ENCODE measurements at regions of chr9 and their contacts with region 1.

Region 1: GRCh38 chr9:21434202-21435014 is 5.8 kb upstream of the IFNA1 start:
- DNase-seq: no peak
- ATAC-seq: peak; percentile 47; the same call in 1 of the 3 replicates
- H3K4me3 ChIP-seq: no peak overlapping the region
- H3K27ac ChIP-seq: no peak overlapping the region
- H3K4me1 ChIP-seq: peaks cover 6% of the 10 kb centered on the region; the same call in 1 of the 2 replicates
- H3K27me3 ChIP-seq: no peaks in the 10 kb centered on the region
- CTCF ChIP-seq: peak; percentile 46 to 51 (median 49); a peak in 5 of 6 replicates
- EP300 ChIP-seq: no peak
- POLR2A ChIP-seq: no peak
- RAD21 ChIP-seq: peak; percentile 38

Region 2: DNA sequence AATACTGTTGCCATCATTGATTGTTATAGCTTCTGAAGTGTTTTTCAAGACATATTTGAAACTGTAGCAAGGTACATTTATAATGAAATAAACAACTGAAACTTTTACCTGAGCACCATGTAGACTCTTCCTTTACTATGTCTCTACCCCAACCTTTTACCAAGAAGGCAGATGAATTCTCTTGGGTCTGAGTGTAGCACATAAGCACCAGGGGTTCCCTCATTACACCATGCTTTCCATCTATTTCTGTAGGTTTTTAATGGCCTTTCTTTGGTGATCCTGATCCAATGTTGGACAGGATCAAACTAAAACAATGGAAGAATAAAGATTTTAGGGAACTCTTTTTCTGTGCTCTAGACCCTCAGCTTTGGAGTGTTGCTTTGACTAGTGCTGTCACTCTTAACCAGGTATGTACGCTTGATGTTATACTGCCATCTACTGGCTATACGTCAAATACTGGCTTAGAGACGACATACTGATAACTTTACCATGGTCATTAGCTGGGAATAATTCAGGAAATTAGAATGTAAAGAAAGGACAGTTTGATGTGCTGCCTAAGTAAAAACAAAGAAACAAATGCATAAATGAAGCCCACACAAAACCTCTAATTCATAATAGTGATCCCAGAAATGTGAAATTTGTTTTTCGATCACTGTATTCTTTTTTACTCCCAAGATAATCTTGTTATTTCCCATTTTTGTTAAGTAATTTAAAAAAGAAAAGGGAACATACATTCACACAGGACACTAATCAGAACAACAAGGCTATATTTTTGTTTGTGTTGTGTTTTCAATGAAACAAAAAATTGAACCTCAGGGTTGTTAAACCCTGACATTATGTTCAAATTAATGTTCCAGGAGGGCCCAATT is 323.5 kb before region 1 on chr9:
- CTCF ChIA-PET with region 1: no interaction called
- POLR2A ChIA-PET with region 1: no interaction called
- RAD21 ChIA-PET with region 1: no interaction called
- SMC1A ChIA-PET with region 1: no interaction called
- in situ Hi-C with region 1: no loop called
- intact Hi-C with region 1: no loop called
- DNase-seq: peak; percentile 44
- ATAC-seq: peak; percentile 99
- H3K4me3 ChIP-seq: no peak overlapping the region
- H3K27ac ChIP-seq: no peak overlapping the region
- H3K4me1 ChIP-seq: no peaks in the 10 kb centered on the region
- H3K27me3 ChIP-seq: no peaks in the 10 kb centered on the region
- CTCF ChIP-seq: peak; percentile 77 to 87 (median 78)
- EP300 ChIP-seq: no peak
- POLR2A ChIP-seq: no peak
- RAD21 ChIP-seq: peak; percentile 97

Region 3: GRCh38 chr9:21294325-21294724 is 140.1 kb before region 1 on chr9:
- CTCF ChIA-PET with region 1: no interaction called
- POLR2A ChIA-PET with region 1: no interaction called
- RAD21 ChIA-PET with region 1: no interaction called
- SMC1A ChIA-PET with region 1: no interaction called
- in situ Hi-C with region 1: no loop called
- intact Hi-C with region 1: no loop called
- DNase-seq: peak; percentile 15
- ATAC-seq: peak; percentile 66
- H3K4me3 ChIP-seq: no peak overlapping the region
- H3K27ac ChIP-seq: no peak overlapping the region
- H3K4me1 ChIP-seq: peaks cover 10% of the 10 kb centered on the region
- H3K27me3 ChIP-seq: no peaks in the 10 kb centered on the region; a peak in 1 of 4 replicates
- CTCF ChIP-seq: no peak
- EP300 ChIP-seq: no peak
- POLR2A ChIP-seq: no peak
- RAD21 ChIP-seq: no peak

Region 4: GRCh38 chr9:21305213-21305612 is 129.2 kb before region 1 on chr9 and contains the start of gene IFNA5:
- CTCF ChIA-PET with region 1: no interaction called
- POLR2A ChIA-PET with region 1: no interaction called
- RAD21 ChIA-PET with region 1: no interaction called
- SMC1A ChIA-PET with region 1: no interaction called
- in situ Hi-C with region 1: no loop called
- intact Hi-C with region 1: no loop called
- DNase-seq: no peak
- ATAC-seq: no peak
- H3K4me3 ChIP-seq: no peak within 1 kb of the TSS
- H3K27ac ChIP-seq: no peak within 1 kb of the TSS
- H3K4me1 ChIP-seq: no peaks in the 10 kb centered on the region
- H3K27me3 ChIP-seq: no peaks in the 10 kb centered on the region; a peak in 2 of 4 replicates
- CTCF ChIP-seq: no peak
- EP300 ChIP-seq: no peak
- POLR2A ChIP-seq: no peak
- RAD21 ChIP-seq: no peak
- polyA plus RNA-seq, gene IFNA5: not detected

Region 5: GRCh38 chr9:21455320-21455719 is 20.9 kb after region 1 on chr9:
- CTCF ChIA-PET with region 1: interaction called, 19 read pairs
- POLR2A ChIA-PET with region 1: no interaction called
- RAD21 ChIA-PET with region 1: interaction called, 6 read pairs
- SMC1A ChIA-PET with region 1: interaction called, 16 read pairs
- in situ Hi-C with region 1: no loop called
- intact Hi-C with region 1: no loop called
- DNase-seq: no peak
- ATAC-seq: peak; percentile 98
- H3K4me3 ChIP-seq: no peak overlapping the region
- H3K27ac ChIP-seq: no peak overlapping the region
- H3K4me1 ChIP-seq: no peaks in the 10 kb centered on the region
- H3K27me3 ChIP-seq: 0 out of 4 replicates have a peak, but pooled peaks cover 0 to 2% of the 10 kb centered on the region in 2 experiments
- CTCF ChIP-seq: peak; percentile 81 to 87 (median 86)
- EP300 ChIP-seq: no peak
- POLR2A ChIP-seq: no peak
- RAD21 ChIP-seq: peak; percentile 89